Naive thymus-derived CD4-positive, alpha-beta T cell (primary cell): ENCODE measurements at regions of chr1 and their contacts with region 1.

Region 1: DNA sequence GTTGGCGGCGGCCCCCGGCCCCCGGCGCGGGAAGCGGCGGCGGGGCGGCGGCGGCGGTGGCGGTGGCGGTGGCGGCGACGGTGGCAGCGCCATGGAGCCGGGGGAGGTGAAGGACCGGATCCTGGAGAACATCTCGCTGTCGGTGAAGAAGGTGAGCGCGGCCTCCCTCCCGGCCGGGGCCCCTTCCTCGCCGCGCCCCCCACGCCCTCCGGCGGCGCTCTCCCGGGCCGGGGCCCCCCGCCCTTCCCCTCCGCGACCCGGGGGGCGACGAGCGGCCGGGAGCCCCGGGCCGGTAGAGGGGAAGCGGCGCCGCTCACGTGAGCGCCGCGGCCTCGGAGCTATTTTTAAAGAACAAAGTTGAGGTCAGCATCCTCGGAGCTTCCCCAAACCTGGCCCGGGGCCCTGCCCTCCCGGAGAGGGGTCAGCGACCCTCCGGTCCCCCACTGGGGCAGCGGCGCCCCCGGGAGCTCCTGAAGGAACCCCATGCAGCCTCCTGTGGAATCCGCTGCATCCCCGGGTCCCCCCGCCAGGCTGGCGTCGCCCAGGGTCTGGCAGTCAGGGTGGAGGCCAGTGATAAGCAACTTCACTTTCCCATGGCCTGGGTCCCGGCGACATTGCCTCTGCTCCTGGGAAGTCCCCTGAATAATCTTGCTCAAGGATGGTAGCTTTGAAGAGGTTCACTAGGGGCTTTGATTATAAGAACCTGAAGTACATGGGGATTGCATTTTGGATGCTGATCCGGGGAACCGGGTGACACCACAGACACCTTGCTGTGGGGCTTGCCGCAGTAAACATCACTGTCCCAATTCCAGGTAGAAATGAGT is 560 bp downstream of the PLEKHM2 start:
- DNase-seq: peak; percentile 15 to 54 (median 33)
- ATAC-seq: peak; percentile 54
- H3K4me3 ChIP-seq: peak overlapping the region; percentile 68
- H3K4me3 Mint-ChIP-seq: peak overlapping the region; percentile 90 to 96 (median 94)
- H3K27ac ChIP-seq: peak overlapping the region; percentile 77
- H3K27ac Mint-ChIP-seq: peak overlapping the region; percentile 45 to 98 (median 95)
- H3K4me1 ChIP-seq: peaks cover 17% of the 10 kb centered on the region in 2 donors
- H3K4me1 Mint-ChIP-seq: peaks cover 25 to 42% (median 30%) of the 10 kb centered on the region in 7 donors
- H3K27me3 ChIP-seq: no peaks in the 10 kb centered on the region
- H3K27me3 Mint-ChIP-seq: no peaks in the 10 kb centered on the region

Region 2: GRCh38 chr1:15603050-15603965 is 81.4 kb before region 1 on chr1:
- CTCF ChIA-PET with region 1: no interaction called
- POLR2A ChIA-PET with region 1: no interaction called
- intact Hi-C with region 1: loop called in 1 of 2 experiments (anchors 5 kb)
- DNase-seq: peak; percentile 80 to 95 (median 90)
- ATAC-seq: peak; percentile 99
- H3K4me3 ChIP-seq: peak overlapping the region; percentile 88
- H3K4me3 Mint-ChIP-seq: peak overlapping the region; percentile 73 to 95 (median 82)
- H3K27ac ChIP-seq: peak overlapping the region; percentile 68
- H3K27ac Mint-ChIP-seq: peak overlapping the region; percentile 57 to 94 (median 81)
- H3K4me1 ChIP-seq: peaks cover 9 to 11% of the 10 kb centered on the region in 2 donors
- H3K4me1 Mint-ChIP-seq: peaks cover 0 to 14% (median 12%) of the 10 kb centered on the region in 7 donors
- H3K27me3 ChIP-seq: no peaks in the 10 kb centered on the region
- H3K27me3 Mint-ChIP-seq: peaks cover 0 to 13% (median 0%) of the 10 kb centered on the region in 5 donors

Region 3: DNA sequence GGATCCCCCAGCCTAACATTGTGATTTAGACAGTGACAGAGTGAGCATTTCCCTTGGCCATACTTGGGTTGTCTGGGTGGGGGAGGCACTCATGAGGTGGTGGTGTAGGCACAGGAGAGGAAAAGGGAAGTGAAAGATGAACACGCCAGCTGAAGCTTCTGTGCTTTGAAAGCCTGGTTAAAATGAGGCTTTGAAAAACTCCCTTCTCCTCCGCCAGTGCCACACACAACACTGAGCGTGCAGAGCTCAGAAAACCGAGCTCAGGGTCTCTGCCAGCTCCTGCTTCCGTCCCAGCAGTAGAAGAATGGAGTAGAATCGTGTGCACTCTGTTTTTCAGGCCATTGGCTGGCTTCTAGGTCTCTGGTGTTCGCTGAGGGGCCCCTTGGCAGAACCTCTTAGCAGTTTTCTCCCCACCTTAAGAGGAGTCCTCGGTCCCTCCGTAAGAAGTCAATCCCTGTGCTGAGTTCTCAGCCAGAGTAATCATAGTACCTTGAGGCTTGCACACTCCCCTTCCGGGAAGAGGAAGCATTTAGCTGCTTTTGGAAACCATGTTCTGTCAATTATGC is 12.4 kb after region 1 on chr1:
- CTCF ChIA-PET with region 1: no interaction called
- POLR2A ChIA-PET with region 1: interaction called, 26 read pairs
- intact Hi-C with region 1: loop called (anchors 1 kb)
- DNase-seq: peak; percentile 17 to 66 (median 53)
- ATAC-seq: peak; percentile 87
- H3K4me3 ChIP-seq: peak overlapping the region; percentile 62
- H3K4me3 Mint-ChIP-seq: peak overlapping the region; percentile 85 to 94 (median 90)
- H3K27ac ChIP-seq: peak overlapping the region; percentile 72
- H3K27ac Mint-ChIP-seq: peak overlapping the region; percentile 84 to 99 (median 95)
- H3K4me1 ChIP-seq: peaks cover 10 to 17% of the 10 kb centered on the region in 2 donors
- H3K4me1 Mint-ChIP-seq: peaks cover 12 to 74% (median 39%) of the 10 kb centered on the region in 7 donors
- H3K27me3 ChIP-seq: no peaks in the 10 kb centered on the region
- H3K27me3 Mint-ChIP-seq: no peaks in the 10 kb centered on the region